Calu3 (cell line): ENCODE measurements at regions of chr1 and their contacts with region 1.

Region 1: DNA sequence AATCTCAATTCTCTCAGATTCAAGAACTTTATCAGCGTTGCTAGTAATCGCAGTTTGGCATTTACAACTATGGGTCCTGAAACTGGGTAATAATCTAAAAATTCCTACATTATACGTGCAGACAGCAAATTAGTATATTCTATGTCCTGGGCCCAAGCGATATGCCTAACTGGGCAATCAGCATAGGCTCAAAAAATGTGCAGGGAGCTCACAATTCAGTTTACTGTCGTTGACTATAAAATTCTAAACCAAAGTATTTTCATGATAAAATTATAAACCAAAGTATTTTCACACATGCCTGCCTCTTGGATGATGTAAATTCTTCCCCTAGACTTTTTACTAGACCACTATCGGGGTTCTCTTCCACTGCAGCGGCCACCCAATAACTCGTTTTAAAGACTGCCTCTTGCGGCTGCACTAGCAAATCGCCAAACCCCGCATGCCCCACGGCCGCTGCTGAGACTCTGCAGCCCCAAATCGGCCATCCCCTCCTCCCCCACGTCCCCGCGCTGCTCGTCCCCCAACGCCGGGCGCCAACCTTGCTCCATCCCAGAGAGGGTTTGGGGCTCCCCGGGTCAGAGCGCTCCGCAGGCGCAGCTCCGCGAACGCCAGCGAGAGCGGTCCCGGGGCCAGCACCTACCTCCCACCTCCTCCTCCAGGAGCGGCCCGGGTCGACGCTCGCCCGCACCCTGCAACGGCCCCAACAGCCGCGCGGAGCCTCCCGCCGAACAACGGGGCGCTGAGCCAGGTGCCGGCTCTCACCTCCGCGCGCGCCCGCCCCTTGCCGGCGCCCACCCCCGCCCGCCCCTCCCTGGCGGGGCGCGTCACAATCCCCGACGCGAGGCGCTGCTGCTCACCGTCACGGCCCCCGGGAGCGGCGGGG is 506 bp downstream of the SSX2IP start:
- DNase-seq: peak; percentile 55
- H3K4me3 Mint-ChIP-seq: peak overlapping the region; percentile 97
- H3K27ac Mint-ChIP-seq: peak overlapping the region; percentile 87
- H3K4me1 Mint-ChIP-seq: peaks cover 46% of the 10 kb centered on the region
- H3K27me3 Mint-ChIP-seq: no peaks in the 10 kb centered on the region
- CTCF ChIP-seq: peak; percentile 10

Region 2: DNA sequence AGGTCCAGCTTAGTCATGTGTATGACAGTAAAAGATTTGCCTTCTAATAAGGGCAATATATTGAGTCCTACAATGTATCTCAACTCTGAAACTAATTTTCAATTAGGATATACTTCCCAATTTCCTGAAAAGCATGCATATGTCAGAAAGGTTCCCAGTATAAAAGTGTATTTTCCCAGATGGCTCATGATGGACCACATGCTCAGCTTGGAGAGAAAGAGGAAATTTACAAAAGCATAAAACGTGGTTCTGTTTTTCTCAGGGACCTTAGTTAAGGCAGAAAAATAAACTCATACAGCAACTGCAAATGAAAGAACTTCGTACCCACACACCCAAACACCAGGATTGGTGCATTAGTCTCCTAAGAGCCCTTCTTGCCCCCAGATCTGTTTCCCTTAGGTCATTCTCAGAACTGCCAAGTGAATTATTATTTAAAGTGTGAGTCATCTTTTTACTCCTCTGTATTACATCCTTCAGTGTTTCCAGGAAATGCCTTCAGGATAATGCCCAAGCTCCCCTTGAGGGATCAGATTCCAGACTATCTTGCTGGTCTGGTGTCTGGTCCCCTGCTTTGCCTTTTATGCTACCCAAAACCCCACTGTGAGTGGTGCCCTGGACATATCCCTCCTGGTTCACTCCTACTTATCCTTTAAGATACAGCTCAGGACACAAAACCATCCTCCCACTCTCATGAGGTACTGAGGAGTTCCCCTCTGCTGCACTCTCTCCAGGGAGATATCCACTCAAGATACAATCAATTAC is 56.9 kb before region 1 on chr1:
- CTCF ChIA-PET with region 1: no interaction called
- intact Hi-C with region 1: loop called (anchors 5 kb)
- DNase-seq: peak; percentile 30
- H3K4me3 Mint-ChIP-seq: no peak overlapping the region
- H3K27ac Mint-ChIP-seq: peak overlapping the region; percentile 78
- H3K4me1 Mint-ChIP-seq: peaks cover 30% of the 10 kb centered on the region
- H3K27me3 Mint-ChIP-seq: no peaks in the 10 kb centered on the region
- CTCF ChIP-seq: no peak

Region 3: DNA sequence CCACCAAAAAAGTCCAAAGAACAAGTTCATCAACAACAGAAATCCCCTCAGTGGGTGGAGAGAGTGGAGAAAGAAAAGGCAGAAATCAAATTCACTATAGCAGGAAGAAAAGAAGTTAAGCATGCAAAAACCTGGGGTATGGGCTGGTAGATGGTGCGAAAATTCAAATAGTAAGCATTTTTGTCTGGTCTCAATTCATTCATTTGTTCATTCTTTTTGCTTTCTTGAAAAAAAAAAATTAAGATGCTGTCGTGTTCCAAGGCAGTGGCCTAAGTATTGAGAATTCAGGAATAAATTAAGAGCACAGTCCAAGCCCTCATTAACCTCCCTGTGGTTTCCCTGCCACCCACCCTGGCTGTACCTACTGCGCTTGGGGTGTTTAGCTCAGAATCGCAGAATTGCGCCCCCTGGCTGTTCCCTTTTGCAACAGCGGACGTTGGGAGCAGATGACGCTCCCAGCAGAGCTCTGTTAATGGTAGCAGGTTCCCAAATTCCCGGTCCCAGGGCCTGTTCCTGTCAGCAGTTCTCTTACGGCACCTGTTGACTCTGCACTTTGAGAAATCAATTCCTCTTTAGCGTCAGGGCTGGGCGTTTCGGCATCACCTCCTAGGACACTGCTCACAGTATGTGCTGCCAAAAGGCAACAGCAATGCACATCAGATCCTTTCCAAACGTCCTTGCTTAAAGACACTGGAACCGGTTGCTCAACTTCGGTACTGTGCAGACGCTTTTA is 34.5 kb after region 1 on chr1:
- CTCF ChIA-PET with region 1: no interaction called
- intact Hi-C with region 1: loop called (anchors 5 kb)
- DNase-seq: no peak
- H3K4me3 Mint-ChIP-seq: no peak overlapping the region
- H3K27ac Mint-ChIP-seq: no peak overlapping the region
- H3K4me1 Mint-ChIP-seq: peaks cover 28% of the 10 kb centered on the region
- H3K27me3 Mint-ChIP-seq: no peaks in the 10 kb centered on the region
- CTCF ChIP-seq: peak; percentile 19

Region 4: GRCh38 chr1:84742653-84743052 is 52.9 kb after region 1 on chr1:
- CTCF ChIA-PET with region 1: no interaction called
- intact Hi-C with region 1: loop called (anchors 5 kb)
- DNase-seq: no peak
- H3K4me3 Mint-ChIP-seq: no peak overlapping the region
- H3K27ac Mint-ChIP-seq: no peak overlapping the region
- H3K4me1 Mint-ChIP-seq: peaks cover 9% of the 10 kb centered on the region
- H3K27me3 Mint-ChIP-seq: no peaks in the 10 kb centered on the region
- CTCF ChIP-seq: no peak